Brain microvascular endothelial cell (primary cell): ENCODE measurements at regions of chr3 and their contacts with region 1.

Region 1: GRCh38 chr3:104604369-104605010 is 762.2 kb upstream of the ALCAM start:
- DNase-seq: peak; percentile 12
- H3K4me3 ChIP-seq: peak overlapping the region; percentile 36
- H3K27ac ChIP-seq: no peak overlapping the region
- H3K27me3 ChIP-seq: no peaks in the 10 kb centered on the region
- CTCF ChIP-seq: peak; percentile 47

Region 2: DNA sequence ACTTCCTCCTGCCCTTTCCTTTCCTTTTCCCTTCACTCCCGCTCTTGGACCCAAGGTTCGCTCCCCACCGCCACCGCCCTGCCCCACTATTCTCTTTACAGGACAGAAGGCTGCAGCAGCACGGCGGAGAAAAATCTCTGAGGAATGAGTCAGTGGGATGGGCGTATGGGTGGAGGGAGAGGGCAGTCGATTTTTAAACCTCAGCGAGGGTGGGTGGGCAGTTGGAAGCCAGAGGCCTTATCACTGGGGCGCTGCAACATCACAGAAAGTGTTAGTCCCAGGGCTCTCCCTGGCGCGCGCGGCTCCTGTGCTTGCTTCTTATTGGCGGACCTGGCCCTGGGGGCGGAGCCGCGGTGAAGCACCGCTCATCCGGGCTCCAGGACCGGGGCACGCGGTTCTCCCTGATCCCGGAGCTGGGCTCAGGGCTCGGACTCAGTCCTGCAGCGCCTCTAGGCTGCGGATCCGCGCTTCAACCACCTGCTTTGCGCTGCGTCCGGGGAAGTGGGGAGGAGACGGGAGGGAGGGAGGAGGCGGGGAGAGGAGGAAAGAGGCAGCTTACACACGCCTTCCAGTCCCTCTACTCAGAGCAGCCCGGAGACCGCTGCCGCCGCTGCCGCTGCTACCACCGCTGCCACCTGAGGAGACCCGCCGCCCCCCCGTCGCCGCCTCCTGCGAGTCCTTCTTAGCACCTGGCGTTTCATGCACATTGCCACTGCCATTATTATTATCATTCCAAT is 762.0 kb after region 1 on chr3 and contains the start of gene ALCAM:
- in situ Hi-C with region 1: loop called (anchors 25 kb)
- DNase-seq: peak; percentile 98
- H3K4me3 ChIP-seq: peak within 1 kb of the TSS; percentile 89
- H3K27ac ChIP-seq: peak within 1 kb of the TSS; percentile 92
- H3K27me3 ChIP-seq: no peaks in the 10 kb centered on the region
- CTCF ChIP-seq: peak; percentile 81